ENCODE measurements at regions of chr18 and their contacts with region 1.

Region 1: GRCh38 chr18:58416704-58417683 is 211.9 kb downstream of the ALPK2 start:
- DNase-seq: peak in 1 of 5 donors; percentile 38
- H3K4me3 ChIP-seq: no peak overlapping the region
- H3K27ac ChIP-seq: peak overlapping the region in 1 of 2 donors; percentile 1
- H3K4me1 ChIP-seq: peaks cover 0 to 17% (median 0%) of the 10 kb centered on the region in 3 donors
- H3K27me3 ChIP-seq: no peaks in the 10 kb centered on the region
- CTCF ChIP-seq: no peak

Region 2: GRCh38 chr18:58276789-58277739 is 139.9 kb before region 1 on chr18:
- intact Hi-C with region 1: no loop called
- DNase-seq: no peak
- H3K4me3 ChIP-seq: no peak overlapping the region
- H3K27ac ChIP-seq: peak overlapping the region; percentile 47 to 48
- H3K4me1 ChIP-seq: peaks cover 0 to 20% (median 14%) of the 10 kb centered on the region in 3 donors
- H3K27me3 ChIP-seq: no peaks in the 10 kb centered on the region
- CTCF ChIP-seq: no peak

Region 3: DNA sequence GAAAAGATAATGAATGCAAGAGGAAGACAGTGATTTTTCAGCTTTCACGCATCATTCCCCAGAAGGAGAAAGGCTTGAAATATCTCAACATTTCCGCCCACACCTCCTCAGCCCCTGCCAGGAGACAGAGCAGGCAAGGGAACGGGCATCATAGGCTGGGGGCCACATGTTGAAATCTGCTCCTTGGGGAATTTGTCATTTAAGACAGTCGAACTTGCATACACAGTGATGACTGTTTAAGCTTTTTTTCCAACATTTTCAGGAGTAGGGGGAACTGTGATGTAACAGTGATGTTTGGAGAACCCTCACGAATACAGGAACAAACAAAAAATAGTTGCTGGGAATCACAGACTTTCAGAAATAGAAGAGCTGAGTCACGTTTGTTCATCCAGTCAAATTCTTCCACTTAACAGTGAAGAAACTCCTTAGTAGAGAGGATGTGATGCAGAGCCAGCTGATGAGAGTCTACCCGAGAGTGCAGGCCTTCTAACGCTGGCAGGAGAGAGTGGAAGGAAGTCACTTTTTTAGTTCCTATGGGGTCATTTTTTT is 54.9 kb before region 1 on chr18:
- intact Hi-C with region 1: no loop called
- DNase-seq: peak in 2 of 5 donors; percentile 33 to 40
- H3K4me3 ChIP-seq: no peak overlapping the region
- H3K27ac ChIP-seq: no peak overlapping the region
- H3K4me1 ChIP-seq: no peaks in the 10 kb centered on the region
- H3K27me3 ChIP-seq: no peaks in the 10 kb centered on the region
- CTCF ChIP-seq: no peak

Region 4: DNA sequence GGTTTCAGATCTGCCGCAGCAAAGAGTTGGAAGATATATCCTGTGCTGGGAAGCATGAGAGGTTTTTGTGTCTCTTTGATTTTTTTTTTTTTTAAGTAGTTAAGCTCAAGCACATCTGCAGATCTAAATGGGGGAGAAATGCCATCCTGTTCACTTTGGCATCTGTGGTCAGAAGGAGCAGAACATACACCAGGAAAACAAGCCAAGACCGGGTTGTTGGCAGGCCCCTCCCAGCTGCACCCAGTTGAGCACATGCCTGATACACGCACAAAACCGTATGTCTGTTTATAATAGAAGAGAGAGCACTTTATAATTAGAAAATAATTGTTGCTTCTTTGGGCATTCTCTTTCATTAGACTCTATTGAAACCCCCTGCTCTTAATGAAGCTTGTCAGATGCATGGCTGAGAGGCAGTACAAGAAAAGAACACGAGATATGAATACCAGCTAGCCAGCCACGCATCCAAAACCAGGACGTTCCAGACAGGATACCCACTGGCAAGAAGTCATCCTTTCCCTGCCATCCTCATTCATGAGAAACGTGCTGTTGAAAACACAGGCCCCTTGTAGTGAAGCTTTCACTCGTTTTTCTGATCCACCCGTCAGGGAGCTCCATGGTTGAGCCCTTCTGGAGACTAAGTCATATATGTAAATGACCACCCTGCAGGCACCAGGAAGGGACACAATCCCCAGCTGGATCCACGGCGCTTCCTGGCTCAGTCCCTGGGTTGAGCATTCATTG is 59.7 kb after region 1 on chr18:
- intact Hi-C with region 1: loop called (anchors 10 kb)
- DNase-seq: peak in 1 of 5 donors; percentile 4
- H3K4me3 ChIP-seq: no peak overlapping the region
- H3K27ac ChIP-seq: no peak overlapping the region
- H3K4me1 ChIP-seq: no peaks in the 10 kb centered on the region
- H3K27me3 ChIP-seq: no peaks in the 10 kb centered on the region
- CTCF ChIP-seq: no peak

Measured in kidney (tissue), 22 donors.